RWPE1 (cell line): ENCODE measurements at regions of chr21 and their contacts with region 1.

Region 1: GRCh38 chr21:31213795-31214194 is 130.3 kb downstream of the TIAM1 start:
- DNase-seq: no peak
- H3K27ac ChIP-seq: no peak overlapping the region
- CTCF ChIP-seq: no peak

Region 2: GRCh38 chr21:31248601-31249000 is 34.8 kb after region 1 on chr21:
- CTCF ChIA-PET with region 1: no interaction called
- POLR2A ChIA-PET with region 1: no interaction called
- DNase-seq: peak; percentile 49
- H3K27ac ChIP-seq: no peak overlapping the region
- CTCF ChIP-seq: no peak

Region 3: DNA sequence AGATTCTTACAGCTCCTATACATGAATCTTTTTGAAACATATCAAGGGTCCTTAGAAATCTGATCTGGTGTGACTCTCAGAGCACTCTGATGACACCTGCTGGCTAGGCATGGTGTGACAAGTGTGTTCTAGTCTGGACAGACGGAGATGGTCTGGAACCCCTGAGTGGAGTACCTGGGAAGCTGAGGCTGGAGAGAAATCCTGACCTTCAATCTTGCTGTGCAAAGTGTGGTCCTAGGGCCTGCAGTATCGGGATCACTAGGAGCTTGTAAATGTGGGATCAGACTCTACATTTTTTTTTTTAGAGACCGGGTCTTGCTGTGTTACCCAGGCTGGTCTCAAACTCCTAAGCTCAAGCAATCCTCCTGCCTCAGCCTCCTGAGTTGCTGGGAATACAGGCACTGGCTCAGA is 367.1 kb after region 1 on chr21:
- CTCF ChIA-PET with region 1: interaction called, 10 read pairs
- POLR2A ChIA-PET with region 1: no interaction called
- DNase-seq: peak; percentile 54
- H3K27ac ChIP-seq: no peak overlapping the region
- CTCF ChIP-seq: peak; percentile 79